Endothelial cell of umbilical vein (primary cell): ENCODE measurements at regions of chr10 and their contacts with region 1.

Region 1: DNA sequence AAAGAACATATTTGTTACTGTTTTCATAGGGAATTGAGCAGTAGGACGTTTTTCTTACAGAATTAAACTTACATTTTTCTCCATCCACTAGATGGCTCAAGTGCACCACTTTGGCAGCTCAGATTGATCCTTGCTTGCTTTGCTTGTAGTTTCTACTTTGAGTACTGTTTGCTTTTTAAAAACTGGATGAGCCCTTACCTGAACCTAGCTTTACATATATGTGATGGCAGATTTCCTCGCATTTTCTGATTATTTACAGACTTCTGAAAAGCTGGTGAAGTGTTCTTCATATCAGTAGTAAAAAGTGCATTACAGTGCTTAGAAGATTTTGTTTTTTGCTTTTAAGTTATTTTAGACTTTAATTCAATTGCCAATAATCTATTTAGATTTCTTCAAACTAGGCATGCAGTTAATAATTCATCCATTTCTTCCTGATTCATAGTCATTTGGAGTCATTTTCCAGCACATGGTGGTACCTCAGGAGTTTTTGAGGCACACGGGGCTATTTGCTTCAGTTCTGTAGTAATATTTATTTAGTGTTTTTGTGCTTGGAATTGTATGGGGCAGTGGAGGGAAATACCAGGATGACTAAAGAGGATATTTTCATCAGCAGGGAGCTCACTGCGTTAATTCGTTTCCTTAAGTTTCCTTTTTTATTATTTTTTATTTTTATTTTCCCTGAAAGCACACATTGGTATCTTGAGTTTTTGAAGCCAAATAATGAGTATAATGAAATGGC is 57.3 kb downstream of the MAPK8 start:
- DNase-seq: peak; percentile 90
- H3K4me3 ChIP-seq: peak overlapping the region in 1 of 3 experiments; percentile 46
- H3K27ac ChIP-seq: peak overlapping the region; percentile 77
- H3K4me1 ChIP-seq: peaks cover 41% of the 10 kb centered on the region
- H3K27me3 ChIP-seq: no peaks in the 10 kb centered on the region
- CTCF ChIP-seq: peak; percentile 45 to 47
- POLR2A ChIP-seq: no peak

Region 2: GRCh38 chr10:48390933-48391845 is 27.4 kb after region 1 on chr10:
- CTCF ChIA-PET with region 1: interaction called, 23 read pairs
- POLR2A ChIA-PET with region 1: no interaction called
- dilution Hi-C with region 1: no loop called
- intact Hi-C with region 1: loop called (anchors 1 kb)
- DNase-seq: peak; percentile 91
- H3K4me3 ChIP-seq: no peak overlapping the region
- H3K27ac ChIP-seq: peak overlapping the region; percentile 79
- H3K4me1 ChIP-seq: peaks cover 30% of the 10 kb centered on the region
- H3K27me3 ChIP-seq: no peaks in the 10 kb centered on the region
- CTCF ChIP-seq: no peak
- POLR2A ChIP-seq: no peak

Region 3: GRCh38 chr10:48439031-48439430 is 75.2 kb after region 1 on chr10:
- CTCF ChIA-PET with region 1: interaction called, 69 read pairs
- POLR2A ChIA-PET with region 1: interaction called, 4 read pairs
- dilution Hi-C with region 1: no loop called
- intact Hi-C with region 1: loop called (anchors 1 kb)
- DNase-seq: no peak
- H3K4me3 ChIP-seq: no peak overlapping the region
- H3K27ac ChIP-seq: no peak overlapping the region
- H3K4me1 ChIP-seq: no peaks in the 10 kb centered on the region
- H3K27me3 ChIP-seq: no peaks in the 10 kb centered on the region
- CTCF ChIP-seq: no peak
- POLR2A ChIP-seq: no peak

Region 4: GRCh38 chr10:48523820-48524758 is 160.3 kb after region 1 on chr10:
- CTCF ChIA-PET with region 1: interaction called, 12 read pairs
- POLR2A ChIA-PET with region 1: no interaction called
- dilution Hi-C with region 1: no loop called
- intact Hi-C with region 1: loop called (anchors 1 kb)
- DNase-seq: no peak
- H3K4me3 ChIP-seq: peak overlapping the region in 2 of 3 experiments; percentile 30 to 54
- H3K27ac ChIP-seq: no peak overlapping the region
- H3K4me1 ChIP-seq: peaks cover 33% of the 10 kb centered on the region
- H3K27me3 ChIP-seq: no peaks in the 10 kb centered on the region
- CTCF ChIP-seq: peak; percentile 69 to 77
- POLR2A ChIP-seq: no peak

Region 5: GRCh38 chr10:48623009-48623408 is 259.2 kb after region 1 on chr10:
- CTCF ChIA-PET with region 1: no interaction called
- POLR2A ChIA-PET with region 1: no interaction called
- dilution Hi-C with region 1: no loop called
- intact Hi-C with region 1: no loop called
- DNase-seq: no peak
- H3K4me3 ChIP-seq: no peak overlapping the region
- H3K27ac ChIP-seq: no peak overlapping the region
- H3K4me1 ChIP-seq: peaks cover 28% of the 10 kb centered on the region
- H3K27me3 ChIP-seq: no peaks in the 10 kb centered on the region
- CTCF ChIP-seq: no peak
- POLR2A ChIP-seq: no peak

Region 6: GRCh38 chr10:48946891-48947500 is 583.2 kb after region 1 on chr10:
- CTCF ChIA-PET with region 1: no interaction called
- POLR2A ChIA-PET with region 1: no interaction called
- dilution Hi-C with region 1: no loop called
- intact Hi-C with region 1: loop called (anchors 10 kb)
- DNase-seq: peak; percentile 91
- H3K4me3 ChIP-seq: no peak overlapping the region
- H3K27ac ChIP-seq: peak overlapping the region; percentile 74
- H3K4me1 ChIP-seq: peaks cover 32% of the 10 kb centered on the region
- H3K27me3 ChIP-seq: no peaks in the 10 kb centered on the region
- CTCF ChIP-seq: no peak
- POLR2A ChIP-seq: no peak